CD4-positive, alpha-beta T cell (primary cell): ENCODE measurements at regions of chr10 and their contacts with region 1.

Region 1: GRCh38 chr10:26860443-26861204 is at the start of gene ABI1:
- DNase-seq: peak; percentile 96 to 99 (median 98)
- ATAC-seq: peak; percentile 90
- H3K4me3 ChIP-seq: peak within 1 kb of the TSS; percentile 91
- H3K4me3 Mint-ChIP-seq: peak within 1 kb of the TSS; percentile 95
- H3K27ac ChIP-seq: peak within 1 kb of the TSS; percentile 88 to 97
- H3K27ac Mint-ChIP-seq: peak within 1 kb of the TSS; percentile 87
- H3K4me1 ChIP-seq: peaks cover 22% of the 10 kb centered on the region
- H3K4me1 Mint-ChIP-seq: peaks cover 33% of the 10 kb centered on the region
- H3K27me3 ChIP-seq: no peaks in the 10 kb centered on the region
- H3K27me3 Mint-ChIP-seq: peaks cover 7% of the 10 kb centered on the region
- CTCF ChIP-seq: no peak
- total RNA-seq, gene ABI1: 83.2 to 83.6 TPM

Region 2: GRCh38 chr10:26448706-26449435 is 411.8 kb before region 1 on chr10:
- CTCF ChIA-PET with region 1: no interaction called
- POLR2A ChIA-PET with region 1: no interaction called
- intact Hi-C with region 1: loop called in 1 of 2 experiments (anchors 5 kb)
- DNase-seq: peak; percentile 42 to 94 (median 62)
- ATAC-seq: peak; percentile 82
- H3K4me3 ChIP-seq: peak overlapping the region; percentile 20
- H3K4me3 Mint-ChIP-seq: peak overlapping the region; percentile 84
- H3K27ac ChIP-seq: peak overlapping the region; percentile 70 to 79
- H3K27ac Mint-ChIP-seq: peak overlapping the region; percentile 94
- H3K4me1 ChIP-seq: peaks cover 66% of the 10 kb centered on the region
- H3K4me1 Mint-ChIP-seq: peaks cover 92% of the 10 kb centered on the region
- H3K27me3 ChIP-seq: no peaks in the 10 kb centered on the region
- H3K27me3 Mint-ChIP-seq: no peaks in the 10 kb centered on the region
- CTCF ChIP-seq: no peak

Region 3: GRCh38 chr10:26725837-26726727 is 134.5 kb before region 1 on chr10:
- CTCF ChIA-PET with region 1: interaction called, 9 read pairs
- POLR2A ChIA-PET with region 1: interaction called, 7 read pairs
- intact Hi-C with region 1: loop called (anchors 5 kb)
- DNase-seq: peak; percentile 16 to 79 (median 38)
- ATAC-seq: peak; percentile 59
- H3K4me3 ChIP-seq: no peak overlapping the region
- H3K4me3 Mint-ChIP-seq: no peak overlapping the region
- H3K27ac ChIP-seq: no peak overlapping the region
- H3K27ac Mint-ChIP-seq: no peak overlapping the region
- H3K4me1 ChIP-seq: peaks cover 7% of the 10 kb centered on the region
- H3K4me1 Mint-ChIP-seq: peaks cover 9% of the 10 kb centered on the region
- H3K27me3 ChIP-seq: no peaks in the 10 kb centered on the region
- H3K27me3 Mint-ChIP-seq: no peaks in the 10 kb centered on the region
- CTCF ChIP-seq: peak; percentile 93

Region 4: DNA sequence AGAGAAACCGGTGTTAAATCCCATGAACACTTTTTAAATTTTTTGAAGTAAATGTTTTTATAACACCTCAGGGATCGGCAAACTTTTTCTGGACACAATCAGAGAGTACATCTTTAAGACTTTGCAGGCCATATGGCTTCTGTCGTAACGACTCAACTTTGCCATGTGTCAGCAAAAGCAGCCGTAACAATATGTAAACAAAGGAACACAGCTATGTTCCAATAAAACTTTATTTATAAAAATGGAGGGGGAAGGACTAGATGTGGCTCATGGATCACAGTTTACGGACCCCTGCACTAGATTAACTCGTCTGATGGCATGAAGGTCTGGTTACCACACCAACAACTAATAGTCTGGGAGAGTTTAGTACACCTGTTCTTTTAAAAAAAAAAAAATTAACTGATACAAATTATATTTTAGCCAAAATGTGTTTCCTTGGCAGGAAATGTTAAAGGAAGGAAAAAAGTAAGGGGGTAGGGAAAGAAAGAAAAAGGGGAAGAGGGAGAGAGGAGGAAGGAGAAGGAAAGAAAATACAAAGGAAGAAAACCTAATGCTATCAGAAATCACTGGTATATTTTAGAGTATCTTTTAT is 50.1 kb before region 1 on chr10:
- CTCF ChIA-PET with region 1: interaction called, 3 read pairs
- POLR2A ChIA-PET with region 1: no interaction called
- intact Hi-C with region 1: loop called in 1 of 2 experiments (anchors 5 kb)
- DNase-seq: no peak
- ATAC-seq: no peak
- H3K4me3 ChIP-seq: no peak overlapping the region
- H3K4me3 Mint-ChIP-seq: no peak overlapping the region
- H3K27ac ChIP-seq: no peak overlapping the region
- H3K27ac Mint-ChIP-seq: no peak overlapping the region
- H3K4me1 ChIP-seq: peaks cover 18% of the 10 kb centered on the region
- H3K4me1 Mint-ChIP-seq: peaks cover 77% of the 10 kb centered on the region
- H3K27me3 ChIP-seq: no peaks in the 10 kb centered on the region
- H3K27me3 Mint-ChIP-seq: no peaks in the 10 kb centered on the region
- CTCF ChIP-seq: no peak

Region 5: DNA sequence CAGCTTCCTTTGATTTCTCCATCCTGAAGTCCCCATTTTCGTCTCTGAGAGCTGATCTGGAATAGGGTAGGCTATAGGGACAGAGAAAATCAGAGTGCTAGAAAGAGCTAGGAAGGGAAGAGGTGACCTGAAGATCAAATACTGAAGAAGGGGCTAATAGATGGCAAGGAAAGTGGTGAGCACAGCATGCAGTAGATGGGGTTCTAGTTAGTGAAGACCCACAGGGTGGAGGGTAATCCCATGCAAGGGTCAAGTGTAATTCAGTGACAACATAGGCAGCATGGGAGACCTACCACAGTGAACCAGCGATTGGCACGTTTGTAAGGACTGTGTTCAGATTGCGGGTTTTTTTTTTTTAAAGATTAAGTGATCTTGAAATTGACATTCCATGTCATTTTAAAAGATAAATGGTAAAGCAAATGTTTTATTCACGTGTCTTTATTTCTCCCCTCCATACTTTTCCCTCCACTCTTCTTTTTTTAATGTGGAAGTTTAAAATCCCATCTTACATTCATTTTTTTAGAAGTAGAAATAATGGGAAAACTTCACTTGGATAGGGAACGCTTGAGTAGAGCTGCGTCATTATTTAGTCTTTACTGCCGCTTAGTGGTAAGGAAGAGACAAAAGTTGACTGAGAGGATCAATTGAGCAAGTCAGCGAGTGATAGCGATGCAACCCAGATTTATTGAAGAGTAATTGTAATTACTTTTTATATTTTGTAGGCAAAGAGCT is 21.1 kb after region 1 on chr10:
- CTCF ChIA-PET with region 1: interaction called, 6 read pairs
- POLR2A ChIA-PET with region 1: interaction called, 3 read pairs
- intact Hi-C with region 1: loop called (anchors 1 kb)
- DNase-seq: peak in 4 of 14 experiments; percentile 22 to 78 (median 60)
- ATAC-seq: peak; percentile 92
- H3K4me3 ChIP-seq: no peak overlapping the region
- H3K4me3 Mint-ChIP-seq: no peak overlapping the region
- H3K27ac ChIP-seq: no peak overlapping the region
- H3K27ac Mint-ChIP-seq: no peak overlapping the region
- H3K4me1 ChIP-seq: no peaks in the 10 kb centered on the region
- H3K4me1 Mint-ChIP-seq: no peaks in the 10 kb centered on the region
- H3K27me3 ChIP-seq: peaks cover 0 to 4% of the 10 kb centered on the region in 2 experiments
- H3K27me3 Mint-ChIP-seq: peaks cover 12% of the 10 kb centered on the region
- CTCF ChIP-seq: peak; percentile 85

Region 6: GRCh38 chr10:26931223-26931622 is 70.6 kb after region 1 on chr10:
- CTCF ChIA-PET with region 1: no interaction called
- POLR2A ChIA-PET with region 1: no interaction called
- intact Hi-C with region 1: no loop called
- DNase-seq: peak in 2 of 14 experiments; percentile 3 to 4
- ATAC-seq: no peak
- H3K4me3 ChIP-seq: no peak overlapping the region
- H3K4me3 Mint-ChIP-seq: no peak overlapping the region
- H3K27ac ChIP-seq: no peak overlapping the region
- H3K27ac Mint-ChIP-seq: no peak overlapping the region
- H3K4me1 ChIP-seq: peaks cover 6% of the 10 kb centered on the region
- H3K4me1 Mint-ChIP-seq: no peaks in the 10 kb centered on the region
- H3K27me3 ChIP-seq: no peaks in the 10 kb centered on the region
- H3K27me3 Mint-ChIP-seq: peaks cover 4% of the 10 kb centered on the region
- CTCF ChIP-seq: no peak

Region 7: GRCh38 chr10:27241652-27242472 is 381.2 kb after region 1 on chr10:
- CTCF ChIA-PET with region 1: no interaction called
- POLR2A ChIA-PET with region 1: no interaction called
- intact Hi-C with region 1: loop called (anchors 5 kb)
- DNase-seq: peak; percentile 70 to 95 (median 84)
- ATAC-seq: peak; percentile 61
- H3K4me3 ChIP-seq: peak overlapping the region; percentile 92
- H3K4me3 Mint-ChIP-seq: peak overlapping the region; percentile 88
- H3K27ac ChIP-seq: peak overlapping the region; percentile 85 to 97
- H3K27ac Mint-ChIP-seq: peak overlapping the region; percentile 94
- H3K4me1 ChIP-seq: peaks cover 35% of the 10 kb centered on the region
- H3K4me1 Mint-ChIP-seq: peaks cover 50% of the 10 kb centered on the region
- H3K27me3 ChIP-seq: no peaks in the 10 kb centered on the region
- H3K27me3 Mint-ChIP-seq: no peaks in the 10 kb centered on the region
- CTCF ChIP-seq: peak; percentile 49